PC-9 (cell line): ENCODE measurements at regions of chr16 and their contacts with region 1.

Region 1: GRCh38 chr16:87853411-87854052 is 15.8 kb downstream of the SLC7A5 start:
- DNase-seq: peak; percentile 89 to 95
- H3K4me3 ChIP-seq: peak overlapping the region; percentile 58
- H3K27ac ChIP-seq: peak overlapping the region; percentile 99
- H3K4me1 ChIP-seq: peaks cover 50% of the 10 kb centered on the region
- H3K27me3 ChIP-seq: no peaks in the 10 kb centered on the region
- CTCF ChIP-seq: no peak

Region 2: GRCh38 chr16:87790278-87791032 is 63.1 kb before region 1 on chr16:
- CTCF ChIA-PET with region 1: interaction called, 3 read pairs
- POLR2A ChIA-PET with region 1: no interaction called
- intact Hi-C with region 1: loop called (anchors 5 kb)
- DNase-seq: peak; percentile 39 to 76
- H3K4me3 ChIP-seq: no peak overlapping the region
- H3K27ac ChIP-seq: peak overlapping the region; percentile 77
- H3K4me1 ChIP-seq: peaks cover 38% of the 10 kb centered on the region
- H3K27me3 ChIP-seq: no peaks in the 10 kb centered on the region
- CTCF ChIP-seq: no peak

Region 3: GRCh38 chr16:87806603-87807546 is 46.7 kb before region 1 on chr16:
- CTCF ChIA-PET with region 1: no interaction called
- POLR2A ChIA-PET with region 1: no interaction called
- intact Hi-C with region 1: loop called (anchors 2 kb)
- DNase-seq: peak; percentile 85 to 91
- H3K4me3 ChIP-seq: peak overlapping the region; percentile 71
- H3K27ac ChIP-seq: peak overlapping the region; percentile 95
- H3K4me1 ChIP-seq: peaks cover 23% of the 10 kb centered on the region
- H3K27me3 ChIP-seq: no peaks in the 10 kb centered on the region
- CTCF ChIP-seq: no peak

Region 4: DNA sequence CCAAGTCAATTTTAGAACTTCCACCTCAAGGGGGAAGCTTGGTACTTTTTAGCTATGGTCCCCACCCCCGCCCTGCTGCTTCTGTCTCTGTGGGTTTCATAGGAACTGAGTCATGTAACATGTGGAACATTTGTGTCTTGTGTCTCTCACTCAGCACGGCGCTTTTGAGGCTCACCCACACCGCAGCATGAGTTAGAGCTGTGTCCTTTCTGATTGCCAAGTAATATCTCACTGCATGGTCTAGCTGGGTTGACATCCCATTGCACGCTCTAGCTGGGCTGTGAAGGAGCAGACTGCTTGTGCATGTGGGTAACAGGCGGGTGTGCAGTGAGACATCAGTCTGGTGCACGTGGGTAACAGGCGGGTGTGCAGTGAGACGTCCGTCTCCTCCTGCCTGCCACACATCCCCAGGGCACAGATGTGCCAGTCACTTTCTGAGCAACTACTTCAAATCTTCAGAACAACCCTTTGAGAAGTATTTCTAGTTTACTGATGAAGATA is 42.2 kb after region 1 on chr16:
- CTCF ChIA-PET with region 1: no interaction called
- POLR2A ChIA-PET with region 1: no interaction called
- intact Hi-C with region 1: no loop called
- DNase-seq: no peak
- H3K4me3 ChIP-seq: no peak overlapping the region
- H3K27ac ChIP-seq: no peak overlapping the region
- H3K4me1 ChIP-seq: no peaks in the 10 kb centered on the region
- H3K27me3 ChIP-seq: no peaks in the 10 kb centered on the region
- CTCF ChIP-seq: no peak

Region 5: DNA sequence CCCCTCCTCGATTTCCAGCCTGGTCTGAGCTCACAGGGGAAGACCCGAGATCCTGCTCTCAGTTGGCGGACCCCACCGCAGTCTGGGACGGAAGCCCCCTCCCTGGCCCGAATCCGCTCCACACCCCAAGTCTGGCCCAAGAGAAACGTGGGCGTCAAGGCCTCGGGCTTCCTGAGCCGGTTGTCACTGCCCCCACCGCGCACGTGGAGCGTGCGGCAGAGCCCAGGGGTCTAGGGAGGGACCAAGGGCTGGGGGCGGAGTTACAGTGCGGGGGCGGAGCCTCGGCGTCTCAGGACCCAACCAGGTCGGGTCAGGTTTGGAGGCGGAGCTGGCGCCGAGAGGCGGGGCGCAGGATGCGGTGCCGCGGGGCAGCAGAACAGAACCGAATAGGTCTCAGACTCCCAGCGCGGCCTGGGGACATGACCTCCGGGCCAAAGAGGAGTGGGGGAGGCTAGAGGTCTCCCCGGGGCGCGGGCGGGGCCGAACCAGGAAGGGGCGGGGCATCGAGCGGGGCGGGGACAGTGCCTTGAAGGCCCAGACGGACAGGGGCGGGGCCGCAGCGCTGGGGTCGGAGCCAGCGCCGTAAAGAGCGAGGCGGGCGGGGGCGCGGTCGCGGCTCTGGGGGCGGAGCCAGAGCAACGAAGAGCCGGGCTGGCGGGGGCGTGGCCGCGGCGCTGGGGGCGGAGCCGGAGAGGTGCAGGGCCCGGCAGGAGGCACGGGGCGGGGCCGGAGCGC is 599.1 kb after region 1 on chr16:
- CTCF ChIA-PET with region 1: no interaction called
- POLR2A ChIA-PET with region 1: no interaction called
- intact Hi-C with region 1: loop called (anchors 10 kb)
- DNase-seq: peak; percentile 79 to 99
- H3K4me3 ChIP-seq: peak overlapping the region; percentile 81
- H3K27ac ChIP-seq: no peak overlapping the region
- H3K4me1 ChIP-seq: peaks cover 27% of the 10 kb centered on the region
- H3K27me3 ChIP-seq: peaks cover 17% of the 10 kb centered on the region
- CTCF ChIP-seq: no peak